ENCODE measurements at regions of chr6 and their contacts with region 1.

Region 1: DNA sequence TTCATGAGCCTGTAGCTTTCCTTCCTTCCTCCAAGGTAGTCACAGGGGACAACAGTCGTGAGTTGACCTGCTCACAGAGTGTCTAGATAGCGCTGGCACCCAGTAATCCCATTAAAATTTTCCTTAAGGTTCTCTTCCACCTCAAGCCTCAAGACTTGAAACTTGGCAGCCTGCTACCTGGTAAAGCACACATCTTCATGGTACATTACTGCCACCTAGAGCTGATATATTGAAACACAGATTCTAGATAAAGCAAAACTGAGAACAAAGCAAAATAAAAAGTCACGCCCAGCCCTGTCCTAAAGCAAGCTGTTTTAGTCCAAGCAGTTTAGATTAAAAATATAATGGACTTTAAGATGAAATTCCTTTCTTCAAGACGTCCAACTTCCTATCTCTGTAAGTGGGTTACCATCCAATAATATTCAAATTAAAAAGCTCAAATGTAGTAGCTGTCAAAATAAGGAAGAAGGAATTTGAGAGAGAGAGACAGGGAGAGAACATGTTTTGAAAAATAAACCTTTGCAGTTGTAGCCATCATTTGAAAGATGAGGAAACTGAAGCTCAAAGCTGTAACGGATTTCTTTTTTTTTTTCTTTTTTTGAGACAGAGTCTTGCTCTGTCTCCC is 50.7 kb upstream of the CD83 start:
- DNase-seq: no peak
- H3K4me3 Mint-ChIP-seq: peak overlapping the region; percentile 32
- H3K27ac Mint-ChIP-seq: peak overlapping the region; percentile 74
- H3K4me1 Mint-ChIP-seq: peaks cover 41% of the 10 kb centered on the region
- H3K27me3 Mint-ChIP-seq: peaks cover 17% of the 10 kb centered on the region

Region 2: DNA sequence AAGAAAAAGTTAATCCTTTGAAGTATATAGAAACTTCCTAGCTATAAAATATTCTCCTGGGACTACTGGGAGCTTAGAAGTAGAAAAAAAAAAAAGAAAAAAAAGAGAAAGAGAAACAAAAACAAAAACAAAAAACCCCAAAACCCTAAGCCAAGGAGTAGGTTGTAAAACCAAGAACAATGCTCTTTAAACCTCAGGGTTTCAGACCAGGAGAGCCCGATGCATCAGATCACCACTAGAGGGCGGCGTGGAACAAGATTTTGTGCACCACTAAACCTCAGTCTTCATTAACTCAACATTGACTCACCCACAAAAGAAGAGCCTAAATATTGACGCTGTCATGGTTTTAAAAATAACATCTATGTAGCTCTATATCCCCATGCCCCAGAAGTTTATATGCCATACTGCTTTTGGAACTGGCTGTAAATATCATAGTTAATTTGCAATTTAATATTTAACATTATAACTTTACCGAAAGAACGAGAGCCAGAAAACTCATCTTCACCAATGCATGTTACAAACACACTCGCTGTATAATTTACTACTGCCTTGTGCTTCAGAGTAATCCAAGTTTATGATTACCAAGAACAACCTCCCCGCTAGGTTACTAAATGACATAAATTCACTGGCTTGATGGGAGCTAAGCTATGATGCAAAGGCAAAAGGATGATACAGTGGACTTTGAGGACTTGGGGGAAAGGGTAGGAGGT is 271.7 kb before region 1 on chr6:
- intact Hi-C with region 1: loop called (anchors 2 kb)
- DNase-seq: peak; percentile 76
- H3K4me3 Mint-ChIP-seq: no peak overlapping the region
- H3K27ac Mint-ChIP-seq: peak overlapping the region; percentile 77
- H3K4me1 Mint-ChIP-seq: peaks cover 24% of the 10 kb centered on the region
- H3K27me3 Mint-ChIP-seq: no peaks in the 10 kb centered on the region

Region 3: DNA sequence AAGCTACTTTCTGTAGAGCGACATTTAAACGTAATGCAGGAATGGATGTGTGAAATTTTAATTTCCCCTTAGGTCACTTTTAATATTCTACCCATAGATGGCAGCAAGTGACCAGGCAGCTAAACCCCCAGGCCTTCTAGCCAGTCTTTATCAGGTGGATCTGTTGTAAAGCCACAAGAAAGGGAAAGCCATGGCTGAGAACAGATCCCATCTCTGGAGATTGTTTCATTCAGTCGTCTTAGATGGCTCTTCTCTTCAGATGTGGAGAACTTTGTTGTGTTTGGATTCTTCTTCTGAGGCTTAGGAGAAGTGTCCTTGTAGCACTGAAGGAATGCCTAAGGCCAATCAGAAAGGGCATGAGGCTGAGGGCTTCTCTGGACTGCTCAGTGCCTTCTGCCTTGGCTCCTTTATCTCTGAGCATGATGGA is 157.9 kb before region 1 on chr6:
- intact Hi-C with region 1: loop called (anchors 1 kb)
- DNase-seq: peak; percentile 20
- H3K4me3 Mint-ChIP-seq: no peak overlapping the region
- H3K27ac Mint-ChIP-seq: no peak overlapping the region
- H3K4me1 Mint-ChIP-seq: peaks cover 10% of the 10 kb centered on the region
- H3K27me3 Mint-ChIP-seq: peaks cover 70% of the 10 kb centered on the region

Region 4: GRCh38 chr6:14089224-14089623 is 22.3 kb after region 1 on chr6:
- intact Hi-C with region 1: loop called (anchors 1 kb)
- DNase-seq: no peak
- H3K4me3 Mint-ChIP-seq: no peak overlapping the region
- H3K27ac Mint-ChIP-seq: no peak overlapping the region
- H3K4me1 Mint-ChIP-seq: peaks cover 39% of the 10 kb centered on the region
- H3K27me3 Mint-ChIP-seq: peaks cover 4% of the 10 kb centered on the region